ENCODE measurements at regions of chr7 and their contacts with region 1.

Region 1: GRCh38 chr7:78783179-78783962 is 670.1 kb downstream of the MAGI2 start:
- DNase-seq: no peak
- ATAC-seq: peak; percentile 32; the same call in 1 of the 2 replicates
- H3K4me3 Mint-ChIP-seq: no peak overlapping the region
- H3K27ac Mint-ChIP-seq: no peak overlapping the region
- H3K4me1 Mint-ChIP-seq: peaks cover 36% of the 10 kb centered on the region
- H3K27me3 Mint-ChIP-seq: no peaks in the 10 kb centered on the region; the same call in 1 of the 2 replicates
- CTCF ChIP-seq: no peak

Region 2: DNA sequence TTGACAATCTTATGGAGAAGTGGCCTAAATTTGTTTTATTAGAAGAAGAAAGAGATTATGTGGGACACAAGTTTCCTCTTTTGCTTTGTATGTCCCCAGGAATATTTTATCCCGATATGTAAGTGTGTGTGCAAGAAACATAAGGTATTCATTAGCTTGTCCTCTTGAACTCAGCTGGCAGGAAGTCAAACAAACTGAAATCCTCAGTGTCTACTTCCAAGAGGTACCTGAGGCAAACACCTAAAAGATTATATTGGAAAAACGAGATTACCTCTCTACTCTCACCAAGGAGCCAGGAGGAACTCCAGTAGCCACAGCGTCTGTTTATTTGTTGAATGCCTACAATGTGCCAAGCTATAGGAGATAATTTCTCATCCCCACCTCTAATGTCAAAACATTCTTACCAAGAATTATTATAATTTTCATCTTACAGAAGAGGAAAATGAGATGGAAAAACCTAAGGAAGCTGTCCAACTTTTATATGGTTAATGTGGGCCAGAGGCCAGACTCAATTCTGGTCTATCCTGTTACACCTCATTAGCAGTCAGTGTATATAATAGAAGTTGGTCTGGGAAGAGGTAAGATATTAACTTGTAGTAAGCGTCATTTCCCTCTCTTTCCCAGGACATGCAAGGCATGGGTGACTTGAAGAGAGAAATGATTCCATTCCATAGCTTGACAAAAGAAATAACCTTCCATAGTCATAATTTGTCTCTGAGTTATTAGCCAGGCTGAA is 22.6 kb before region 1 on chr7:
- CTCF ChIA-PET with region 1: no interaction called
- POLR2A ChIA-PET with region 1: interaction called, 11 read pairs
- DNase-seq: no peak
- ATAC-seq: no peak
- H3K4me3 Mint-ChIP-seq: no peak overlapping the region
- H3K27ac Mint-ChIP-seq: no peak overlapping the region
- H3K4me1 Mint-ChIP-seq: peaks cover 20% of the 10 kb centered on the region
- H3K27me3 Mint-ChIP-seq: no peaks in the 10 kb centered on the region
- CTCF ChIP-seq: no peak

Region 3: DNA sequence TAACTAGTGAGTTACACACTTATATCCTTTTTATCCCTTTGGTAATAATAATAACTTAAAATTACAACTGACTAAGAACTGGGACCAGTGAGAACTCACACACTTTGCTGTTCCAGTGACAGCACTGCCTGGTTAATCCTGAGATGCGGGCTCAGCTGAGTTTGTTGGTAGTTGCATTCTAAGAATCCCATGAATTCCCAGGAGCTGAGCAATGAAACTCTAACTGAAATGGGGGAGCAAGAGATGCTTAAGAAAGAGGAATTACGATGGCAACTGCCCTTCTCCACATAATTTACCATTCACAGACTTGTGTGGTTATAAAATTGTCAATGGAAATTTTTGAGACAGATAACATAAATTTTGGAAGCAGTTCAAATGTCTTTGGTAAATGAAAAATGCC is 10.7 kb after region 1 on chr7:
- CTCF ChIA-PET with region 1: no interaction called
- POLR2A ChIA-PET with region 1: no interaction called
- DNase-seq: no peak
- ATAC-seq: peak; percentile 30; the same call in 1 of the 2 replicates
- H3K4me3 Mint-ChIP-seq: no peak overlapping the region
- H3K27ac Mint-ChIP-seq: no peak overlapping the region
- H3K4me1 Mint-ChIP-seq: peaks cover 12% of the 10 kb centered on the region
- H3K27me3 Mint-ChIP-seq: peaks cover 5% of the 10 kb centered on the region; the same call in 1 of the 2 replicates
- CTCF ChIP-seq: no peak

Region 4: DNA sequence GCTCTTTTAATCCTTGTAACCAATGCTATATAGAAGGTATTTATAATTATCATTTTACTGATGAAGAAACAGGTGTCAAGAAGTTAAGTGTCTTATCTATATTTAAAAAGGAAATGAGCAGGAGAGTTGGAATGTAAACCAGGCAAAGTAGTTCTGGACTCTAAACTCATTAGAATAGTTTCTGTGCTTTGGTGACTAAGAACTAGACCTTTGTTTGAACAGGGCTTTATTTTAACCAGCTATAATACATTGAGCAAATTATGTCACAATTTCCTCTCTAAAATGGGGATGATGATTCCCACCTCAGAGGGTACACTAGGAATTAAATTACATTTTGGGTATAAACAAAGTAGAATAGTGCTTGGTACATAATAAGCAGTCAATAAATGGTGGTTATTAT is 434.1 kb after region 1 on chr7:
- CTCF ChIA-PET with region 1: no interaction called
- POLR2A ChIA-PET with region 1: no interaction called
- DNase-seq: no peak
- ATAC-seq: no peak
- H3K4me3 Mint-ChIP-seq: no peak overlapping the region
- H3K27ac Mint-ChIP-seq: no peak overlapping the region
- H3K4me1 Mint-ChIP-seq: peaks cover 3% of the 10 kb centered on the region
- H3K27me3 Mint-ChIP-seq: no peaks in the 10 kb centered on the region
- CTCF ChIP-seq: no peak

Measured in WTC11 (cell line).